Activated CD4-positive, alpha-beta memory T cell treated with anti-CD3 and anti-CD28 coated beads for 36 hours (primary cell): ENCODE measurements at regions of chr2 and their contacts with region 1.

Region 1: GRCh38 chr2:183038341-183039300 is at the start of gene NCKAP1:
- DNase-seq: peak; percentile 90
- H3K4me3 Mint-ChIP-seq: peak within 1 kb of the TSS; percentile 78
- H3K27ac Mint-ChIP-seq: peak within 1 kb of the TSS; percentile 51
- H3K4me1 Mint-ChIP-seq: peaks cover 28% of the 10 kb centered on the region
- H3K27me3 Mint-ChIP-seq: peaks cover 35% of the 10 kb centered on the region
- total RNA-seq, gene NCKAP1: 18.8 to 21.7 TPM

Region 2: GRCh38 chr2:182949572-182950189 is 88.9 kb before region 1 on chr2:
- CTCF ChIA-PET with region 1: no interaction called
- POLR2A ChIA-PET with region 1: no interaction called
- intact Hi-C with region 1: loop called (anchors 5 kb)
- DNase-seq: no peak
- H3K4me3 Mint-ChIP-seq: no peak overlapping the region
- H3K27ac Mint-ChIP-seq: no peak overlapping the region
- H3K4me1 Mint-ChIP-seq: peaks cover 5% of the 10 kb centered on the region
- H3K27me3 Mint-ChIP-seq: no peaks in the 10 kb centered on the region

Region 3: GRCh38 chr2:183112577-183112976 is 74.0 kb after region 1 on chr2:
- CTCF ChIA-PET with region 1: no interaction called
- POLR2A ChIA-PET with region 1: no interaction called
- intact Hi-C with region 1: no loop called
- DNase-seq: no peak
- H3K4me3 Mint-ChIP-seq: no peak overlapping the region
- H3K27ac Mint-ChIP-seq: no peak overlapping the region
- H3K4me1 Mint-ChIP-seq: no peaks in the 10 kb centered on the region
- H3K27me3 Mint-ChIP-seq: peaks cover 8% of the 10 kb centered on the region

Region 4: GRCh38 chr2:183124222-183124956 is 85.8 kb after region 1 on chr2 and contains the start of gene NUP35:
- CTCF ChIA-PET with region 1: interaction called, 3 read pairs
- POLR2A ChIA-PET with region 1: no interaction called
- intact Hi-C with region 1: loop called (anchors 1 kb)
- DNase-seq: peak; percentile 90
- H3K4me3 Mint-ChIP-seq: peak within 1 kb of the TSS; percentile 94
- H3K27ac Mint-ChIP-seq: peak within 1 kb of the TSS; percentile 97
- H3K4me1 Mint-ChIP-seq: peaks cover 30% of the 10 kb centered on the region
- H3K27me3 Mint-ChIP-seq: peaks cover under 1% of the 10 kb centered on the region
- total RNA-seq, gene NUP35: 27.6 to 31.7 TPM